MCF 10A (cell line): ENCODE measurements at regions of chr11 and their contacts with region 1.

Region 1: GRCh38 chr11:20363500-20364411 is at the start of gene HTATIP2:
- DNase-seq: peak; percentile 71
- H3K4me3 Mint-ChIP-seq: peak within 1 kb of the TSS; percentile 75
- H3K27ac Mint-ChIP-seq: peak within 1 kb of the TSS; percentile 93
- H3K4me1 Mint-ChIP-seq: peaks cover 32% of the 10 kb centered on the region
- H3K27me3 Mint-ChIP-seq: no peaks in the 10 kb centered on the region
- CTCF ChIP-seq: no peak
- total RNA-seq, gene HTATIP2: 42.5 and 55.8 TPM in 2 replicates

Region 2: DNA sequence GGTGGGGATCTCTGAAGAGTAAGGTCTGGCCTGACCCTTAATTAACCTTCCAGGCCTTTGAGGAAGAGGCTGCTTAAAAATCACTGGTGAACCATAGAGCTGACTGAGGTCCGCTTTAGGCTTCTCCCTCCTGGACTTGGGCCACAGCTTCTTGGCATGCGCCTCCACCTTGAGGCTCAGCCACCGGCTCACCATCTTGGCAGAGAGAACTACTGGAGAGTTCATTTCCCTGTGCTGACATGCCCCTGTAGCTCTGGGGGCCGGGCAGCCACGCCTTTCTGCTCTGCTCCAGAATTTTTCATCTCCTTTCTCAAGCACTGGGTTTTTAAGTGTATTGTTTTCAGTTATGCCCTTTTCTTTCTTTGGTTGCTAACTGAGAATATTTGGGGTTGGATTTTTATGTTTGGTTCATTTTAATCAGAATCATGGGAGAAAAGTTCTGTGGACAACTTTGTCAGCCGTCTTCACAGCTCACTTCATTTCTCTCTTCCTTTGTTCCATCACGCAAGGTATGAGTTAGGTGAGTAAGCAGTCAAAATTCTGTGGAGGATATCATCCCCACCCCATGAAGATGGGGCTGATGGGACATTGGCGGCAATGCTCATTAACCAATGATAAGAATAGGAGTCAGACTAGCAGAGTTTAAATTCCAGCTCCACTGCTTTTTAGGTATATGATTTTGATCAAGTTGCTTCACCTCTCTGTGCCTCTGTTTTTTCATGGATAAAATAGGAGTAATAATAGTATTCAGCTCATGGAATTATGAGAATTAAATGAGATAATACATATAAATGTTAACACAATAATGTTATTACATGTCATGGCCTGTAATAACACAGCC is 307.4 kb before region 1 on chr11:
- CTCF ChIA-PET with region 1: interaction called, 3 read pairs
- POLR2A ChIA-PET with region 1: interaction called, 13 read pairs
- intact Hi-C with region 1: no loop called
- DNase-seq: peak; percentile 92
- H3K4me3 Mint-ChIP-seq: peak overlapping the region; percentile 26
- H3K27ac Mint-ChIP-seq: peak overlapping the region; percentile 90
- H3K4me1 Mint-ChIP-seq: peaks cover 67% of the 10 kb centered on the region
- H3K27me3 Mint-ChIP-seq: no peaks in the 10 kb centered on the region
- CTCF ChIP-seq: no peak

Region 3: GRCh38 chr11:20374746-20375300 is 11.1 kb after region 1 on chr11:
- CTCF ChIA-PET with region 1: interaction called, 5 read pairs
- POLR2A ChIA-PET with region 1: interaction called, 12 read pairs
- intact Hi-C with region 1: no loop called
- DNase-seq: peak; percentile 41
- H3K4me3 Mint-ChIP-seq: no peak overlapping the region
- H3K27ac Mint-ChIP-seq: peak overlapping the region; percentile 92
- H3K4me1 Mint-ChIP-seq: peaks cover 15% of the 10 kb centered on the region
- H3K27me3 Mint-ChIP-seq: no peaks in the 10 kb centered on the region
- CTCF ChIP-seq: no peak

Region 4: DNA sequence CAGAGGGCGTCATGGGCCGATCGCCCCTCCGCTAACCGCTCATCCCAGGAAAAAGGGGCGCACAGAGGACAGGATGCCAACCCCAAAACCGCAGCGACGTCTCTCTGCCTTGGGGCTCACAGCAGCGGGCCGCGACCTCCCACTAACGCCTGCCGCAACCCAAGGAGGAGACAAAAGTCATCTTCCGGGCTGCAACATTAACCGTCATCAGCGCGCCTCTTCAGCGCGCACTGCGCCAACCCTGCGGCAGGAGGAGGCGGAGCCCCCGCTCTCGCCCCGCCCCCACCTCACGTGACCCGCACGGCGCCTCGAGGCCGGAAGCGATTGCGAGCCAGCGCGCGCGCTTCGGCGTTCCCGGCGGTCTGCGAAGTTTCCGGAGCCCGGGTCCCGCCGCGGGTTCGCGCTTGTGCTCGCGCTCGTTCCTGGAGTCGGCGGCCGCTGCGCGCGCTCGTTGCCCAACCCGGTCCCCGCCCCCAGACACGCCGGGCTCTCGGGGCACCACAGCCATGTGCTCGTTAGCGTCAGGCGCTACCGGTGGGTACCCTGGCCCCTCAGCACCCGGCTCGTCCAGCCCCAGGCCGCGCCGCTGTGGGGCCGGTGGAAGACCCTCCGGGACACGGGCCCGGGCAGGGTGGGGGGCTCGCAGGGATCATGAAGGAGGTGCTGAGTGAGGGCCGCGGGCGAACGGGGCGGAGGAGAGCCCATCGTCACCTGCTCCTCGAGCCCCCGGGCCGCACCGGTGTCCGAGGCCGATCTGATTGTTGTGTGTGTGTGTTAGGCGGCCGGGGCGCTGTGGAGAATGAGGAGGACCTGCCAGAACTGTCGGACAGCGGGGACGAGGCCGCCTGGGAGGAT is 23.7 kb after region 1 on chr11 and contains the start of gene PRMT3:
- CTCF ChIA-PET with region 1: interaction called, 5 read pairs
- POLR2A ChIA-PET with region 1: interaction called, 28 read pairs
- intact Hi-C with region 1: loop called (anchors 2 kb)
- DNase-seq: peak; percentile 94
- H3K4me3 Mint-ChIP-seq: peak within 1 kb of the TSS; percentile 87
- H3K27ac Mint-ChIP-seq: peak within 1 kb of the TSS; percentile 97
- H3K4me1 Mint-ChIP-seq: no peaks in the 10 kb centered on the region
- H3K27me3 Mint-ChIP-seq: no peaks in the 10 kb centered on the region
- CTCF ChIP-seq: peak; percentile 96
- total RNA-seq, gene PRMT3: 45.1 and 60.1 TPM in 2 replicates